ENCODE measurements at regions of chr13 and their contacts with region 1.

Region 1: DNA sequence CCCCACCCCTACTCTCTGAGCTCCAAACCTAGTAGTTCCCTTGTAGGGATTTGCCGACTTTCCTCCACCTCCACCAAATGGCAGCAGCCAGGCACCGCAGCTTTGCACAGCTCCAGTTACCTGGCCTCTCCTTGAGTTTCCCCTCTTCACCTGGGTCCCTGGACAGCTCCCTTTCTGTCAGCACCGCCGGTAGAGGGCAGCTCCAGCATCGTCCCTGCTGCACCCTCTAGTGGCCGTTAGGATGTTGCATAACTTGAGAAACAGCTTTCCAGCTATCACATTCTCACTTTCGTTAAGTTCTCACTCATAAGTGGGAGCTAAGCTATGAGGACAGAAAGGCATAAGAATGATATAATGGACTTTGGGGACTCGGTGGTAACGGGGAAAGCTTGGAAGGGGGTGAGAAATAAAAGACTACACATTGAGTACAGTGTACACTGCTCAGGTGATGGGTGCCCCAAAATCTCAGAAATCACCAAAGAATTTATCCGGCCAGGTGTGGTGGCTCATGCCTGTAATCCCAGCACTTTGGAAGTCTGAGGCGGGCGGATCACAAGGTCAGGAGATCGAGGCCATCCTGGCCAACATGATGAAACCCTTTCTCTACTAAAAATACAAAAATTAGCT is 60.4 kb upstream of the OLFM4 start:
- DNase-seq: peak; percentile 77
- ATAC-seq: peak; percentile 95

Region 2: GRCh38 chr13:52599848-52600603 is 368.2 kb before region 1 on chr13:
- intact Hi-C with region 1: loop called (anchors 5 kb)
- DNase-seq: peak; percentile 60
- ATAC-seq: peak; percentile 91

Region 3: DNA sequence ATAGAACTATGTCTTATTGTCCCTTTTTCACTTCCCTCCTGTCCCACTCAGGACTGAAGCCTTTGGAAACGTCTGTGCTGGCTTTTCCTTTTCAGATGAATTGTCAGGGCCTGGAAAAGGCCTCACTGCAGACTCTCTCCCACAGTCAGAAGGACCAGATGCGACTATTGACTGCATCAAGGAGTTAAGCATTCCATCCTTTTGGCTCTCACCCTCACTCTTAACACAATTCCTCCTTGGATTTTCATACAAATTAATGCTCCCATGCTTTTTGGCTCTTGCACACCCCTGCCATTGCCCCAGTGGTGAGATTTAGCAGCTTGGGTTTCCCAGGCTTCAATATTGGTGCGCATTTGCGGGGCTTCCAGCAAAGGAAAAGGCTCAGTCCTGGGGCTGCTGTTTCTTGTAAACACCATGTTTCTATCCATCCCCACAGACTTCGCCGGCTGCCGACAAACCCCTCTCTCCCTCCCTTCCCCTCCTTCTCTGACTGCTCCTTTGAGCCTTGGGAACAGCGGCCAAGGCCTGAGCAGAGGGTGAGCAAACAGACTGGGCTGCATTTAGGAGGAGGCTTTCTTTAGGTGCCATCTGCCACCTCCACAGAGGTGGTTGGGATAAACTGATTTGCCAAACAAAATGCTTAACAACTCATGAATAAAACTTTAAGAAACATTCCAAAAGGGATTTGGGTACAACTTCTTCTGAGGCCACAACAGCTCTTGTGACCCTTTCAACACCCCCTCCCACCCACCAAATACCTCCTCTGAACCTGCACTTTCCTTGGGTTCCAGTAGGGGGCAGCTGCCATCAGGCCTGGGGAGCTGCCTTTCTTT is 71.1 kb before region 1 on chr13:
- intact Hi-C with region 1: no loop called
- DNase-seq: peak; percentile 47
- ATAC-seq: peak; percentile 73

Region 4: DNA sequence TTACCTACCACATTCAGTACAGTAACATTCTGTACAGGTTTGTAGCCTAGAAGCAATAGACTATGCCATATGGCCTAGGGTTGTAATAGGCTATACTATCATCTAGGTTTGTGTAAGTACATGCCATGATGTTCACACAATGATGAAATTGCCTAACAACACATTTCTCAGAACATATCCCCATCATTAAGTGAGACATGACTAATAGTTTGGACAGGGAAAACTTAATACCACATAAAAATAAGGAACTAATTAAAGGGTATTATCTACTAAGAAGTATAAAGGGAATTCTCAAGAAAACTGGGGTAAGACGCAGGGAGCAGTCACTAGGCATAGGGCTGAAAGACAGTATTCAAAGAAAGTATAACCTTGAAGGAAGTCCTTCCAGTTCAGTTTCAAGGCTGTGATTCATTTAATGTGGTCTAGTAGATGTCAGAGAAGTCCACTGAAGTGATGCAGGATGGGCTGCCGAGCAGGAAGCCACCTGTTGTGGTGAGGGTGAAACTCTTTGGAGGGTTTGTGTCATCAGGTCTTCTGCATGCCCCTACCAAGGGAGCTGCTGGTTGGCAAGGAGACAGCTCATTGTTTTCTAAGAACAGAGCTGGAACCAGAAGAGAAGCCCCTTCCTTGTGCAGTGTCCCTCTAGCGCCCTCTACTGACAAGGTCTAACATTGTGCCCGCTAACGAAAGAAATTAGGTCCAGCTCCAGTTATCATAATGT is 183.3 kb after region 1 on chr13:
- intact Hi-C with region 1: loop called (anchors 5 kb)
- DNase-seq: no peak
- ATAC-seq: peak; percentile 62